Right ventricle myocardium inferior (tissue), 1 donor: ENCODE measurements at regions of chr18 and their contacts with region 1.

Region 1: GRCh38 chr18:3703732-3704176 is 253.8 kb downstream of the TGIF1 start:
- DNase-seq: peak; percentile 73
- ATAC-seq: peak; percentile 65

Region 2: GRCh38 chr18:3162181-3162580 is 541.6 kb before region 1 on chr18:
- intact Hi-C with region 1: no loop called
- DNase-seq: no peak
- ATAC-seq: no peak

Region 3: GRCh38 chr18:3329471-3329870 is 374.3 kb before region 1 on chr18:
- intact Hi-C with region 1: no loop called
- DNase-seq: no peak
- ATAC-seq: no peak

Region 4: GRCh38 chr18:3995476-3996102 is 291.8 kb after region 1 on chr18:
- intact Hi-C with region 1: loop called (anchors 2 kb)
- DNase-seq: no peak
- ATAC-seq: peak; percentile 31

Region 5: DNA sequence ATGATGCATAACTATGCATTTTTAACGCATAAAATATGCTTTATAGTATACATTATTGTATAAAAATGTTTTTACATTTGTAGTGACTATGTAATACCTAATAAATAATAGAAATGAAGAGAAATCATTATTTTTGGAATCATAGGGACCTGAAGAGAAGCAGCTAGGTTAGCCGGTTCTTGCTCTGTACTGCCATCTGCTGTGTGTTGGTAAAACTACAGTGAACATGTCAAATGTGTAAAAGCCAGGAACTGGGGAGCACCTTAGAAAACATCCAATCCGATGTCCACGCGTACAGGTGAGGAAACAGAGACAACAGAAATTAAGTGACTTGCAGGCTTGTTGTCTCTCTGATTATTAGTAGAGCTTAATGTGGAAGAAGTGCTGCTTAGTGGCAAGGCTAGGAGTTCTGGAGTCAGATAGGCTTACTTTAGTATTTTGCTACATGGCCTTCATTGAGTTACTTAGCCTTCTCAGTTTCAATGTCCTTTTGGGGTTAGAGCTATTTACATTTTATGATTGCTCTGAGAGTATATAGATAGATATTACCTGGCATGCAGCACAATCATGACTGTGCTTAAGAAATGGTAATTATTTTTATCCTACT is 364.9 kb after region 1 on chr18:
- intact Hi-C with region 1: loop called (anchors 5 kb)
- DNase-seq: no peak
- ATAC-seq: no peak